ENCODE measurements at regions of chr20 and their contacts with region 1.

Region 1: GRCh38 chr20:46607849-46608497 is 43.3 kb downstream of the SLC13A3 start:
- DNase-seq: peak; percentile 68
- ATAC-seq: peak; percentile 54
- H3K4me3 ChIP-seq: peak overlapping the region in 1 of 3 experiments; percentile 32; a peak in 2 of 6 replicates
- H3K27ac ChIP-seq: peak overlapping the region; percentile 80
- H3K4me1 ChIP-seq: peaks cover 65% of the 10 kb centered on the region
- H3K27me3 ChIP-seq: no peaks in the 10 kb centered on the region
- CTCF ChIP-seq: peak; percentile 62
- EP300 ChIP-seq: peak in 1 of 2 experiments; percentile 25; a peak in 1 of 4 replicates
- POLR2A ChIP-seq: no peak
- RAD21 ChIP-seq: no peak

Region 2: GRCh38 chr20:46568570-46569129 is 39.3 kb before region 1 on chr20:
- CTCF ChIA-PET with region 1: no interaction called
- POLR2A ChIA-PET with region 1: interaction called, 15 read pairs
- in situ Hi-C with region 1: no loop called
- intact Hi-C with region 1: loop called (anchors 2 kb)
- DNase-seq: peak; percentile 79
- ATAC-seq: peak; percentile 77
- H3K4me3 ChIP-seq: peak overlapping the region in 1 of 3 experiments; percentile 62; a peak in 4 of 6 replicates
- H3K27ac ChIP-seq: peak overlapping the region; percentile 32
- H3K4me1 ChIP-seq: peaks cover 36% of the 10 kb centered on the region
- H3K27me3 ChIP-seq: no peaks in the 10 kb centered on the region
- CTCF ChIP-seq: peak; percentile 30; the same call in 1 of the 2 replicates
- EP300 ChIP-seq: peak in 1 of 2 experiments; percentile 17; a peak in 1 of 4 replicates
- POLR2A ChIP-seq: no peak
- RAD21 ChIP-seq: peak; percentile 39

Region 3: DNA sequence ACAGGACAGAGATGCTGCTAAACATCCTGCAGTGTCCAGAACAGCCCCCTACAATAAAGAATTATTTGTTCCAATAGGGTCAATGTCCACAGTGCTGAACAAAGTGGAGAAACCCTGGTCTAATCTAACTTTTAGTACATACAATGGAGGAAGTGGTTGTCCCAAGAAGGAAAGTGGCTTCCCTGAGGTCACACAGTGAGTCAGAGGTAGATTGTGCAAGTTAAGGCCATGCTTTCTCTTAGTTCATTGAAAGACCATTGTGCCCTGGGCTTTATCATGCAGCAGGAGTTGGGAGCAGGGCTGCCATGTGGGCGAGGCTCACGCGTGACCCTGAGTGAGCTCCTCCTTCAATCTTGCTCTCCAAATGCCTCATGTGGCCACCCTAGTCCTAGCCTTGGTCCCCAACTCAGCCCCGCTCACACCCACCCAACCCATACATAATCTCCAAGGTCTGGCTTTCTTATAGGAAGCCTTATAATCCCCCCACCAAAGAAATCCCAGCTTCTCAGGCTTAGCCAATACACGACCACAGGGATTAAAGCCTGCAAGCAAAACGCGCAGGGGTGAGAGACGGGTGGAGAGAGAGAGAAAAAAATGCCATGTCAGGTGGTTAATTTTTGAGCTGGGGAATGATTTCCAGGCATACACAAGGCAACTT is 23.4 kb after region 1 on chr20:
- CTCF ChIA-PET with region 1: no interaction called
- POLR2A ChIA-PET with region 1: interaction called, 22 read pairs
- in situ Hi-C with region 1: no loop called
- intact Hi-C with region 1: loop called (anchors 1 kb)
- DNase-seq: peak; percentile 98
- ATAC-seq: peak; percentile 79
- H3K4me3 ChIP-seq: no peak overlapping the region
- H3K27ac ChIP-seq: peak overlapping the region; percentile 59
- H3K4me1 ChIP-seq: peaks cover 88% of the 10 kb centered on the region
- H3K27me3 ChIP-seq: no peaks in the 10 kb centered on the region
- CTCF ChIP-seq: no peak
- EP300 ChIP-seq: peak in 1 of 2 experiments; percentile 90; a peak in 2 of 4 replicates
- POLR2A ChIP-seq: peak in 1 of 2 experiments; percentile 55; a peak in 2 of 4 replicates
- RAD21 ChIP-seq: no peak

Region 4: DNA sequence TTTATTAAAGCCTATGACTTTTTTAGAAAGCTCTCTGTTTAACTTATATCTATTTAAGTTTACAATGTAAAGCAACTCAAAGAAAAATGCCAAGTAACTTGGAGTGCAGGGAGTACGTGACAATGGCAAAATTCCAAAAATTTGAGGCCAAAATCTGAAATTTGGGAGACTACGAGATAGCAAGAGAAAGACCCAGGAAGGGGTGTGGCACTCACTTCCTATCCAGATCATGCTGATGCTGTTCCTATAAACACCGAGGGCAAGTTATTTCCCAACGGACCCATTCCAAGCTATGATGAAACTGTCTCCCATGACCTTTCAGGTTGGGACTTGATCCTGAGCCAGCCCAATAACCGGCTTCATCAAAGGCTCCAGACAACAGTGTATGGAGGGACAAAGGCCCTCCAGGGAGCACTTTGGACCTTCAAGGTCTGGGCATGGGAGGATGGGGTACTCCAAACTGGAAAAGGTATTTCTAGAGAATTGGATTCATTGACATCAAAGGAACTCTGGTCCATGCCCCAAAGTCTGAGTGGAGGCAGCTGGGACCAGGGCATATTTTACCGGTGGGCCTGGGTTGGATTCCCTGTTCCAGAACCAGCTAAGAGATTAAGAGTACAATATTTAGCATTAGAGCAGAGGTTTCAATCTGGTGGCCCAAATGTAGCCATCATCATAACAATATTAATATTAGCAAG is 59.0 kb after region 1 on chr20:
- CTCF ChIA-PET with region 1: no interaction called
- POLR2A ChIA-PET with region 1: interaction called, 11 read pairs
- in situ Hi-C with region 1: no loop called
- intact Hi-C with region 1: no loop called
- DNase-seq: peak; percentile 100
- ATAC-seq: peak; percentile 90
- H3K4me3 ChIP-seq: no peak overlapping the region; a peak in 1 of 6 replicates
- H3K27ac ChIP-seq: peak overlapping the region; percentile 84
- H3K4me1 ChIP-seq: peaks cover 86% of the 10 kb centered on the region
- H3K27me3 ChIP-seq: no peaks in the 10 kb centered on the region
- CTCF ChIP-seq: no peak
- EP300 ChIP-seq: peak; percentile 100
- POLR2A ChIP-seq: no peak
- RAD21 ChIP-seq: peak; percentile 71

Region 5: DNA sequence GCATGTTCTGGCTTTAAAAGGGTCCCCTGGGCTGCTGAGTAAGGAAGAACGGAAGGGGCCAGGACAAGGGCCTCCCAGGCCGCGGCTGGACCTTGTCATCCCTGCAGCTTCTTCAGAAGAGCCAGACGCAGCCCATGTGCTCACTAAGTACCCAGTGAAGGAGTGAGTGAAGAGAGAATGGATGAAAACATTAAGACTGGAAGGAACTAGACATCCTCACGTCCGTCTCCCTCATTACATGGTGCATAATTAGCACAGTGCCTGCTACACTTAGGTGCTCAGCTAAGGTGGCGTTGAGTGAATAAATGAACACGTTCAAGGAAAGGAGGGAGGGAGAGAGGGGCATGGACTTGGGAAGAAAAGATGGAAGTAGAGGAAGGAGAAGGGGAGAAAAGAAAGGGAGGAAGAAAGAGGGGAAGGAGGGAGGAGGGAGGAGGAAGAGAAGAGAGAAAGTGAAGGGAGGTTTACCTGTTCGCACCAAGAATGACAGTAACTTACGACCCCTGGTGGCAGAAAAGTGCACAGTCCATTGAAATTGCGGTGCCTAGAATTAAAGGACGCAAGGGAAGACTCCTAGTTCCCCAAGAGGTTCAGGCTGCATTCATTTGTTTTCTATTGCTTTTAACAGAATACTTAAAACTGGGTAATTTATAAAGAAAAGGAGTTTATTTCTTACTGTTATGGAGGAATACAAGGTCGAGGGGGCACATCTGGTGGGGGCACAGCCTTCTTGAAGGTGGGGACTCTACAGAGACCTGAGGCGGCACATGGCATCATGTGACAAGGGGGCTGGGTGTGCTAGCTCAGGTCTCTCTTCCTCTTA is 73.3 kb after region 1 on chr20:
- CTCF ChIA-PET with region 1: no interaction called
- POLR2A ChIA-PET with region 1: interaction called, 19 read pairs
- in situ Hi-C with region 1: no loop called
- intact Hi-C with region 1: loop called (anchors 1 kb)
- DNase-seq: peak; percentile 82
- ATAC-seq: peak; percentile 59
- H3K4me3 ChIP-seq: no peak overlapping the region
- H3K27ac ChIP-seq: no peak overlapping the region
- H3K4me1 ChIP-seq: peaks cover 88% of the 10 kb centered on the region
- H3K27me3 ChIP-seq: no peaks in the 10 kb centered on the region
- CTCF ChIP-seq: peak; percentile 97
- EP300 ChIP-seq: no peak
- POLR2A ChIP-seq: no peak
- RAD21 ChIP-seq: peak; percentile 98

Region 6: GRCh38 chr20:46857061-46857831 is 249.3 kb after region 1 on chr20:
- CTCF ChIA-PET with region 1: no interaction called
- POLR2A ChIA-PET with region 1: no interaction called
- in situ Hi-C with region 1: no loop called
- intact Hi-C with region 1: no loop called
- DNase-seq: no peak
- ATAC-seq: no peak
- H3K4me3 ChIP-seq: no peak overlapping the region
- H3K27ac ChIP-seq: no peak overlapping the region
- H3K4me1 ChIP-seq: no peaks in the 10 kb centered on the region
- H3K27me3 ChIP-seq: peaks cover 1 to 8% of the 10 kb centered on the region in 2 experiments; a peak in 4 of 5 replicates
- CTCF ChIP-seq: no peak
- EP300 ChIP-seq: no peak
- POLR2A ChIP-seq: no peak
- RAD21 ChIP-seq: no peak

Measured in HepG2 (cell line).